ENCODE measurements at regions of chr7 and their contacts with region 1.

Region 1: GRCh38 chr7:88111136-88111743 is 108.6 kb downstream of the SRI start:
- DNase-seq: peak in 1 of 2 donors; percentile 49
- ATAC-seq: peak in 1 of 3 donors; percentile 43
- H3K4me3 ChIP-seq: no peak overlapping the region
- H3K4me3 Mint-ChIP-seq: no peak overlapping the region
- H3K27ac ChIP-seq: no peak overlapping the region
- H3K27ac Mint-ChIP-seq: no peak overlapping the region
- H3K4me1 ChIP-seq: no peaks in the 10 kb centered on the region
- H3K4me1 Mint-ChIP-seq: no peaks in the 10 kb centered on the region
- H3K27me3 ChIP-seq: no peaks in the 10 kb centered on the region
- H3K27me3 Mint-ChIP-seq: no peaks in the 10 kb centered on the region
- CTCF ChIP-seq: peak; percentile 46

Region 2: GRCh38 chr7:87797798-87798403 is 313.3 kb before region 1 on chr7:
- intact Hi-C with region 1: loop called (anchors 5 kb)
- DNase-seq: peak in 1 of 2 donors; percentile 71
- ATAC-seq: peak; percentile 60 to 73 (median 66)
- H3K4me3 ChIP-seq: no peak overlapping the region
- H3K4me3 Mint-ChIP-seq: no peak overlapping the region
- H3K27ac ChIP-seq: no peak overlapping the region
- H3K27ac Mint-ChIP-seq: no peak overlapping the region
- H3K4me1 ChIP-seq: no peaks in the 10 kb centered on the region
- H3K4me1 Mint-ChIP-seq: no peaks in the 10 kb centered on the region
- H3K27me3 ChIP-seq: no peaks in the 10 kb centered on the region
- H3K27me3 Mint-ChIP-seq: peaks cover 0 to 27% of the 10 kb centered on the region in 2 donors
- CTCF ChIP-seq: peak; percentile 62

Region 3: DNA sequence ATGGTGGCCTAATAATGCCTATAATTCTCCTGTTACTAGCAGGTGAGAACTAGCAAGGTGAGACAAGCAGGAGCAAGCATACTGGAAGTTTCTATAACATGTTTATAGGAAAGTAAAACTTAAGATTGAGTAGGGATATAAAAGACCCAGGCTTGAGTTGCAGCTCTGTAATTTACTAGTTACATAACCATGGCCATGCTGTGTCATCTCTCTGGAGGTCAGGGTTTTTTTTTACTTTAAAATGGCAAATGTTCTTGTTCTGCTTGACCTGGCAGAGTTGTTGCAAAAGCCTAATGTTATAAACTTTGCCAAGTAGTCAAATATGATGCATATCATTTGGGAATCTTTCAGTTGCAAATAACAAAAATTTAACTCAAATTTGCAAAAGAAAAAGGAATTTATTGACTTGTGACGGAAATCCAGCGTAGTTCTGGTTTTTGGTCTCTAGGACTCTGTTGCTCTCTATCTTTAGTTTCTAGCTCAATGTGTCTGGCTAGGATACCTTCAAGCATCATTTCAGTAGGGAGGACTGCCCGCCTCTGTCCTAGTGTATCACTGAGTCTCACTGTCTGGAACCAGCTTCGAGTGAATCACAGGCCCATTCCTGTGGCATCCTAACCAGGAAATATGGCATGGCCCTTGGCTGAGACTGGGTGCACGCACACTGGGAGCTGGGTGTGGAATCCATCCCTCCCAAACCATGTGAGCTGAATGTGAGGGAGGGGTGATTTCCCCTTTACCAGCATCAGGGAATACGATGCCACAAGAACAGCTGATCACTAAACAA is 109.3 kb before region 1 on chr7:
- intact Hi-C with region 1: no loop called
- DNase-seq: no peak
- ATAC-seq: no peak
- H3K4me3 ChIP-seq: no peak overlapping the region
- H3K4me3 Mint-ChIP-seq: no peak overlapping the region
- H3K27ac ChIP-seq: no peak overlapping the region
- H3K27ac Mint-ChIP-seq: no peak overlapping the region
- H3K4me1 ChIP-seq: no peaks in the 10 kb centered on the region
- H3K4me1 Mint-ChIP-seq: no peaks in the 10 kb centered on the region
- H3K27me3 ChIP-seq: no peaks in the 10 kb centered on the region
- H3K27me3 Mint-ChIP-seq: no peaks in the 10 kb centered on the region
- CTCF ChIP-seq: no peak

Region 4: DNA sequence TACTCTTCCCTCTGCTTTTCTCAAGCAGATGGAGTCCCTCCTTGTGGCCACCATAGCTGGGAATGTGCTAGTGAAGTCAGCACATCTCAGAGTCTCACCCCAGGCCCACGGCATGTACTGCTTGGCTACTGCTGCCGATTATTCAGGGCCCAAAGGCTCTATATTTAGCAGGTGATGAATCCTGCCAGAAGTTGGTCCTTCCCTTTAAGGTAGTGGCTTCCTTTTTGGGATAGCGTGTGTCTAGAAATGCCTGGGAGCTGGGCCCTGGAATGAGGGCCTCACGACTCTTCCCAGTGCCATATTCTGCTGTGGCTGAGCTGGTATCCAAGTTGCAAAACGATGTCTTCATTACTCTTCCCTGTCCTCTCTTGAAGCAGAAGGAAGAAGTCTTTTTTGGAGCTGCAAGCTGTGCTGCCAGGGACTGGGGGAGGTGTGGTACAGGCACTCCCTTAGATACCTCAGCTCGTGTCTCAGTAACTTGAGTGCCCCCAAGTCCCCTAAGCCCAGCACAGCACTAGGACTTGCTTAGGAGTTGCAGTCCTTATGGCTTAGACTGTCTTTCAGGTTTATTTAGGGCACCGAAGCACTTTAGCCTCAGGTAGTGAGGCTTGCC is 77.1 kb before region 1 on chr7:
- intact Hi-C with region 1: no loop called
- DNase-seq: no peak
- ATAC-seq: no peak
- H3K4me3 ChIP-seq: no peak overlapping the region
- H3K4me3 Mint-ChIP-seq: no peak overlapping the region
- H3K27ac ChIP-seq: no peak overlapping the region
- H3K27ac Mint-ChIP-seq: no peak overlapping the region
- H3K4me1 ChIP-seq: no peaks in the 10 kb centered on the region
- H3K4me1 Mint-ChIP-seq: no peaks in the 10 kb centered on the region
- H3K27me3 ChIP-seq: no peaks in the 10 kb centered on the region
- H3K27me3 Mint-ChIP-seq: no peaks in the 10 kb centered on the region
- CTCF ChIP-seq: no peak

Region 5: DNA sequence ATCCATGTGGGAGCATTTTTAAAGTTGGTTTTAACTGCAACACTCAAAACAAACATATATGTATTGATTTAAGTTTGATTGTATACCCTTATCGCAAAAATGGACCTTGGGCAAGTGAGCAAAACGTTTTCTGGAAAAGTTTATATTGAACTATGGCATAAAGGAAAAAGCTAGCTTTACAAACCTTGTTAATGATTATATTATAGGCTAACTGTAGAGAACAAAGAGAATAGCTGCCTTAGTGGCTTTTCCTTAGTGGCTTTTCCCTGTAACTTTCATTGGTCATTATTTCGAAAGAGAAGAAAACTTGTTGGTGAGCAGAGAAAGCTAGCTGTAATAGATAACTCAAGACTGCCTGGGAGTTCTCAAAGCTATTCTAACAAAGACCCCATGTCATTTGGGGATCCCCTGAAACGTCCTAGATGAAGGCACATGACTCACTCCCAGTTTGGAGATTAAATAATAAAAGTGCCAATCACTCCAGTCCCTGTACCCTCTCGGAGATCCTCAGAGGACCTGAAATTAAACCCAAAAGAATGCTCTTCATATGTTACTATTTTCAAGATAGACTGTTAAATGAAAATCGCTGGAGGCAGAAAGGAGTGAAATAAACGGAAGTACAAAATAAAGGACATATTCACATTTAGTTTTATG is 16.5 kb after region 1 on chr7:
- intact Hi-C with region 1: no loop called
- DNase-seq: no peak
- ATAC-seq: no peak
- H3K4me3 ChIP-seq: no peak overlapping the region
- H3K4me3 Mint-ChIP-seq: no peak overlapping the region
- H3K27ac ChIP-seq: no peak overlapping the region
- H3K27ac Mint-ChIP-seq: no peak overlapping the region
- H3K4me1 ChIP-seq: no peaks in the 10 kb centered on the region
- H3K4me1 Mint-ChIP-seq: no peaks in the 10 kb centered on the region
- H3K27me3 ChIP-seq: no peaks in the 10 kb centered on the region
- H3K27me3 Mint-ChIP-seq: peaks cover 0 to 3% of the 10 kb centered on the region in 2 donors
- CTCF ChIP-seq: no peak

Region 6: DNA sequence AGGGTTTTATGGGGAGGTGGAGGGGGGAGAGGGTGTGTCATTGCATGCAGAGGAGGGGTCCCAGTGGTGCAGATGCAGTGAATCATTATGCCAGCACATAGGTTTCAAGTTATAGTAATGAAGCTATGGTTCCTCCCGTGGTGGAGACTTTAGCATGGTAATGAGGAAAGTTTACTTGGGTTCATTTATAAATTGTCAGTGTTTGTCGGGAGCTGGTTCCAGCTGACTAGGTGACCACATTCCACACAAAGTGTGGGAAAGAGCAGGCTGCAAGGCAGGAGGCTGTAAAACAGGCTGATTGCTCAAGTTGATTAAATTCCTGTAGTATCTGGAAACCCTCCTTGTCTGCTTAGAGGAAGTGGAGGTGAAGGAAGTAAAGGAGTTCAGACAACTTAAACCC is 29.7 kb after region 1 on chr7:
- intact Hi-C with region 1: no loop called
- DNase-seq: no peak
- ATAC-seq: no peak
- H3K4me3 ChIP-seq: no peak overlapping the region
- H3K4me3 Mint-ChIP-seq: no peak overlapping the region
- H3K27ac ChIP-seq: no peak overlapping the region
- H3K27ac Mint-ChIP-seq: no peak overlapping the region
- H3K4me1 ChIP-seq: no peaks in the 10 kb centered on the region
- H3K4me1 Mint-ChIP-seq: no peaks in the 10 kb centered on the region
- H3K27me3 ChIP-seq: no peaks in the 10 kb centered on the region
- H3K27me3 Mint-ChIP-seq: no peaks in the 10 kb centered on the region
- CTCF ChIP-seq: no peak